Testis (tissue), 5 donors: ENCODE measurements at regions of chr2 and their contacts with region 1.

Region 1: GRCh38 chr2:47386551-47386950 is 16.4 kb upstream of the MSH2 start:
- DNase-seq: no peak
- H3K4me3 ChIP-seq: no peak overlapping the region
- H3K27ac ChIP-seq: no peak overlapping the region
- H3K4me1 ChIP-seq: no peaks in the 10 kb centered on the region
- H3K27me3 ChIP-seq: no peaks in the 10 kb centered on the region
- CTCF ChIP-seq: no peak
- POLR2A ChIP-seq: no peak

Region 2: DNA sequence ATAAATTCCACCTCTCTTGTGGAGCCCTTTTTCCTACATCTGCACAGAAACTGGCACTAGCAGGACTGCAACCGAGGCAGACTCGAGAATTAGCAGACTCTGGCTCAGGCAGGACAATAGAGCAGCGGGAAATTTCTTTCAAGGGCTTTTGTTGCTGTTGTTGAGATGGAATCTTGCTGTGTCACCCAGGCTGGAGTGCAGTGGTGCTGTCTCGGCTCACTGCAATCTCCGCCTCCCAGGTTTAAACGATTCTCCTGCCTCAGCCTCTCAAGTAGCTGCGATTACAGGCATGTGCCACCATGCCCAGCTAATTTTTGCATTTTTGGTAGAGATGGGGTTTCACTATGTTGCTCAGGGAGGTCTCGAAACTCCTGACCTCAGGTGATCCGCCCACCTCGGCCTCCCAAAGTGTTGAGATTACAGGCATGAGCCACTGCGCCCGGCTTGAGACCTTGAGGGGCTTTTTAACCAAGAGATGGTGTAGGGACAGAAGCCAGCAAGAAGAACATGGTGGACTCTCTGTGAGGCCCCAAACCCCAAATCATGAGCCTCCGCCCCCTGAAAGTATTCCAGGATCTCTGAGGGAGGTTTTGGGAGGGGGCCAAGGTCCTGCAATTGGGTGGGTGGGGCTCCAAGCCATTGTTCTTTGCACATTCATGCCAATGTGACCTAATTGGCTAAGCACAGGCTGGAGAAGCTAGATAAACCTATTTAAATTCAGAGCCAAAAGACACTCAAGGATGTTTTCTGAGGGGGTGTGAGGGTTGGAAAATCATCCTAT is 52.0 kb before region 1 on chr2:
- intact Hi-C with region 1: loop called (anchors 5 kb)
- DNase-seq: no peak
- H3K4me3 ChIP-seq: no peak overlapping the region
- H3K27ac ChIP-seq: no peak overlapping the region
- H3K4me1 ChIP-seq: peaks cover 12% of the 10 kb centered on the region
- H3K27me3 ChIP-seq: no peaks in the 10 kb centered on the region
- CTCF ChIP-seq: no peak
- POLR2A ChIP-seq: no peak